ENCODE measurements at regions of chr10 and their contacts with region 1.

Region 1: GRCh38 chr10:22316285-22317120 is at the start of gene COMMD3:
- DNase-seq: peak; percentile 95
- H3K4me3 Mint-ChIP-seq: peak within 1 kb of the TSS; percentile 87
- H3K27ac Mint-ChIP-seq: peak within 1 kb of the TSS; percentile 94
- H3K4me1 Mint-ChIP-seq: peaks cover 29% of the 10 kb centered on the region
- H3K27me3 Mint-ChIP-seq: no peaks in the 10 kb centered on the region
- total RNA-seq, gene COMMD3: 76.7 and 79.7 TPM in 2 replicates

Region 2: DNA sequence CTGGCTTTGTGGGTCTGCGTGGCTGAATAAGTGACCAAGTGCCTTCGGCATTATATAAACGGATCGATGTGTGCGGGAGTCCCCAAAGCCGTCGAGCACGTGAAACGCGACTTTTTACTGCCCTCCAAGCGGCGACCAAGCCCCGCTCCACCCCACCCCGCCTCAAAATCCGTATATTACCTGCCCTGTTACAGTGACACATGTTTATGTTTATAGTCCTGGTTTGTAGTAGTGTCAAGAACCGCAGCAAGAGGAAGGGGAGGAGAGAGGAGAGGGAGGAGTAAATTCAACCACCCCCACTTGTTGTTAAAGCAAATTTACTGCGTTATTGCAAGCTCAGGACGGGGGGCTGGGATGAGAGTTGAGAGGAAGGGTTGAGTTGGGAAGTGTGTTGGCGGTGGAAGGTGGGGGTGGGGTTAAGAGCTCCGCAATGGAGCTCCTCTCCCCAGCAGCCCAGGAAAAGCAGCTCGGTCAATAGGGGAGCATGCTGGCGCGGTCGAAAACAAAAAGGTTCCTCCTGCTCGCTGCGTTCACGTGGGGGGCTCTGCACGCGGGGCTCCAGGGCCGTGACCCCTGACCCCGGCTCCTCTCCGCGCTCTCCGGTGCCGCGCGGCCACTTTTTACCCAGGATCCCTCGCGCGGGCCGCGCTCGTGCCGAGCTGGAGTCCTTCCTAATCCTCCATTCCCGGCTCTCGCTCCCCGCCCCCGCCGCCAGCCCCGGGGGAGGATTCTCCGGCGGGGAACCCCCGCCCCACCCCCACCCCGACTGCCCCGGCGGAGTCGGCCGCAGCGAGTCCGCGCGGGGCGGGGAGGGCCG is 790.9 kb before region 1 on chr10 and contains the start of gene SKIDA1:
- intact Hi-C with region 1: loop called (anchors 5 kb)
- DNase-seq: peak; percentile 87
- H3K4me3 Mint-ChIP-seq: peak within 1 kb of the TSS; percentile 85
- H3K27ac Mint-ChIP-seq: peak within 1 kb of the TSS; percentile 95
- H3K4me1 Mint-ChIP-seq: peaks cover 29% of the 10 kb centered on the region
- H3K27me3 Mint-ChIP-seq: peaks cover 48% of the 10 kb centered on the region
- total RNA-seq, gene SKIDA1: 0.02 and 0.16 TPM in 2 replicates

Region 3: DNA sequence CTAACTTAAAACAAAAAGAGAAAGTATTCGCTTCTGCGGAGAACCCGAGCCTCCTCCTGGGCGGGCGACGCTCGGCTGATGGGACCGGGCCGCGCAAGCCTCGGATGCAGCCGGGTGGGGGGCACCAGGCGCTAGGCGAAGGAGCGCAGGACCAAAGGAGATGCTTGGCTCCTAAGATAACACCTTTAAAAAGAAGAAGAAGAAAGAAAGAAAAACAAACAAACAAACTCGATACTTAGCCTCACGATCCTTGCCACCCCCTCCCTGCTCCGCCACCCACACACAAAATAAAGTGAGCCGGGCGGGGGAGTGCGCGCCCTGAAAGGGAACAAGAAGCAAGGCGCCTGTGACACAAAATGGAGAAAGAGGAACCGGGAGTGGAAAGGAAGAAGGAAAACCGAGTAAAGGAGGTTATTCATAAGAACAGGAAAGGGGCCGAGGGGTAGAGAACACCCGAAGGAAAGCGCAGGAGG is 64.7 kb before region 1 on chr10:
- intact Hi-C with region 1: loop called (anchors 1 kb)
- DNase-seq: peak; percentile 91
- H3K4me3 Mint-ChIP-seq: peak overlapping the region; percentile 91
- H3K27ac Mint-ChIP-seq: peak overlapping the region; percentile 98
- H3K4me1 Mint-ChIP-seq: peaks cover 31% of the 10 kb centered on the region
- H3K27me3 Mint-ChIP-seq: peaks cover 14% of the 10 kb centered on the region

Region 4: DNA sequence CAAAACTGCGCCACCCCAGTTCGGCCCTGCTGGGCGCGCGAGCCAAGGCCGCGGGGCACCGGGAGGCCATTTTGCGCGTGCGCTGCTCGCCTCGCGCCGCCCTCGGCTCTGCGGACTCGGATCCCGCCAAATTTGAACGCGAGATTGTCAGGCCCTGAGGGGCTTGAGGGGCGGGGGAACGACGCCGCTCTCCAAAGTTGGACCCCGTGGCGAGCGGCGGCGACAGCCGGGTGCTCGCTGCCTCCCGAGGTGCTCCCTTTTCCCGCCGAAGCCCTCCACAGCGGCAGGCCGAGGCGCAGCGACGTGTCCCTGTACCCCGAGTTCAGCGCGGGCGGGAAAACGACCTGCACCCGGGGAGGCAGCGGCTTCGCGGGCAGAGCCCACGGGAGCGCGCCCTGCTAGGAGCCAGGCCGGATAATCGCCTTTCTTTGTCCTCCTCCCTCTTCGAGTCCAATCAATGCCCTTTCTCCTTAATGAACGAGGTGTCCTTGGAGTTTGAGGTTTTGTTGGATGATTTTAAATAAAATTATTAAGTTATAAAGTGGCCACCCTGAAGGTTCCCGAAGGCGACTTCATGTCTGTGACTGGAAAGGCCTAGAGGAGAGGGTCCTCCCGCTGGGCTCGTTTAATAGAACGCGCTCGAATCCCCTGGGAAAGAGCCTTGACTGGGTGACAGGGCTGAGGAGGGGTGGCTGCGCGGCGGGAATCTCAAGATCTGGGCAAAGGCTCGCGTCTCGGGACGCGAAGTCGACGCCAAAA is 18.1 kb after region 1 on chr10:
- intact Hi-C with region 1: no loop called
- DNase-seq: no peak
- H3K4me3 Mint-ChIP-seq: peak overlapping the region; percentile 81
- H3K27ac Mint-ChIP-seq: peak overlapping the region; percentile 83
- H3K4me1 Mint-ChIP-seq: peaks cover 38% of the 10 kb centered on the region
- H3K27me3 Mint-ChIP-seq: peaks cover 33% of the 10 kb centered on the region

Region 5: DNA sequence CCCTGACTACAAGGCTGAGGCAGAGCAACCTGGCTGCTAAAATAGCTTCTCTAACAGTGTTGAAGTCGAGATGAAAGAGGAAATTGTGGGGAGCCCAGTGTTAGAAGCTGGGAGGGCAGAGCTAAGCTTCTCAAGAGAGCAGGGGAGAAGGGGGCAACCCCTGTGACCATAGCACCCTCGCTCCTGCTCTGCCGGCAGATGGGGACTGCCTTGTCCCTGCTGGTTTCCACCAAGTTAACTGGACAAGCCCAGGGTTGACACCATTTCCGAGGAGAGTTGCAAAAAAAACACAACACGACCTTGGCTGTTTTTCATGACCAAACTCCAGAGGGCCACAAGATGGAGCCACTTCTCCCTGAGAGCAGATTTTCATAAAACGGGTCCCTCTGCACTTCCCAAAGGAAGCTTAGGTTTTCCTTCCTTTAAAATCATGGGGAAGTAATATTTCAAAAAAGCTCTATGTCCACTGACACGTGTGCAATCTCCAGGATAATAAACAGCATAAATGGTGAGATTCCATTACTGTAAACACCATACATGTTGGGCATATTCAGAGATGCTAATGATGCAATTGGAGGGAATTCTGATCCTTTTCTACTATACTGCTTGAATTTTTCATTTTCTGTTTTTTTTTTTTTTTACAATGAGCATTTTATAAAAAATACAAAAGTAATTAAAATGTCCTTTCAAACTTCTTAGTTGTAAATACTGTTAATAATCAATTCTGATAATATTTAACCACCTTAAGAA is 257.5 kb after region 1 on chr10:
- intact Hi-C with region 1: loop called (anchors 5 kb)
- DNase-seq: no peak
- H3K4me3 Mint-ChIP-seq: no peak overlapping the region
- H3K27ac Mint-ChIP-seq: no peak overlapping the region
- H3K4me1 Mint-ChIP-seq: peaks cover 36% of the 10 kb centered on the region
- H3K27me3 Mint-ChIP-seq: no peaks in the 10 kb centered on the region

Region 6: GRCh38 chr10:22597138-22597537 is 280.6 kb after region 1 on chr10:
- intact Hi-C with region 1: no loop called
- DNase-seq: no peak
- H3K4me3 Mint-ChIP-seq: no peak overlapping the region
- H3K27ac Mint-ChIP-seq: peak overlapping the region; percentile 34
- H3K4me1 Mint-ChIP-seq: peaks cover 46% of the 10 kb centered on the region
- H3K27me3 Mint-ChIP-seq: no peaks in the 10 kb centered on the region